ENCODE measurements at regions of chr3 and their contacts with region 1.

Region 1: GRCh38 chr3:44712455-44713075 is at the start of gene ZNF502:
- DNase-seq: peak; percentile 85
- H3K4me3 ChIP-seq: peak within 1 kb of the TSS; percentile 76 to 98 (median 86)
- H3K27ac ChIP-seq: peak within 1 kb of the TSS; percentile 58
- H3K4me1 ChIP-seq: no peaks in the 10 kb centered on the region
- H3K27me3 ChIP-seq: no peaks in the 10 kb centered on the region
- CTCF ChIP-seq: peak; percentile 35 to 43
- POLR2A ChIP-seq: no peak
- total RNA-seq, gene ZNF502: 4.1 and 4.2 TPM in 2 replicates

Region 2: DNA sequence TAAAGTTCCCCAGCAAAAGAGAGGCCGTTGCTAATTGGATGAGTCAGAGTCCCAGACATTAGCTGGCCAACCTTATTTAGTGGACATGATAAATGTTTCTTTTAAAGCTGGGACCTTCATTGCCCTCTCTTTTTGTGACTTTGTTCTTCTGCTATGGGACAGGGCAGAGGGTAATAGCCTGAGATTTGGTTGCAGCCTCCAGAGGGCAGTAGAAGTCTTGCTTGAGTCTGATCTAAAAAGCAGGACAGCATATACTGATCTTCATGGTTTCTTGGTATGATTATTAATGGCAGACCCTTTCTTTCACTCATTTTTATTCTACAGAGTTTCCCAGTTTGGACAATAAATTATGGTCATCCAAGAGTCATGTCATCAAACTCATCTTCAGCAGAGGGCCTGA is 182.6 kb before region 1 on chr3:
- CTCF ChIA-PET with region 1: interaction called, 5 read pairs
- POLR2A ChIA-PET with region 1: no interaction called
- dilution Hi-C with region 1: no loop called
- intact Hi-C with region 1: loop called (anchors 1 kb)
- DNase-seq: peak; percentile 8
- H3K4me3 ChIP-seq: no peak overlapping the region
- H3K27ac ChIP-seq: no peak overlapping the region
- H3K4me1 ChIP-seq: no peaks in the 10 kb centered on the region
- H3K27me3 ChIP-seq: no peaks in the 10 kb centered on the region
- CTCF ChIP-seq: peak; percentile 21 to 23
- POLR2A ChIP-seq: no peak

Region 3: GRCh38 chr3:44584646-44585501 is 127.7 kb before region 1 on chr3 and contains the start of gene ZNF660:
- CTCF ChIA-PET with region 1: no interaction called
- POLR2A ChIA-PET with region 1: no interaction called
- dilution Hi-C with region 1: no loop called
- intact Hi-C with region 1: no loop called
- DNase-seq: peak; percentile 55
- H3K4me3 ChIP-seq: peak within 1 kb of the TSS; percentile 50 to 61 (median 51)
- H3K27ac ChIP-seq: no peak within 1 kb of the TSS
- H3K4me1 ChIP-seq: peaks cover 2% of the 10 kb centered on the region
- H3K27me3 ChIP-seq: peaks cover 15 to 16% of the 10 kb centered on the region in 2 experiments
- CTCF ChIP-seq: no peak
- POLR2A ChIP-seq: no peak
- total RNA-seq, gene ZNF660: 1.0 and 1.5 TPM in 2 replicates

Region 4: DNA sequence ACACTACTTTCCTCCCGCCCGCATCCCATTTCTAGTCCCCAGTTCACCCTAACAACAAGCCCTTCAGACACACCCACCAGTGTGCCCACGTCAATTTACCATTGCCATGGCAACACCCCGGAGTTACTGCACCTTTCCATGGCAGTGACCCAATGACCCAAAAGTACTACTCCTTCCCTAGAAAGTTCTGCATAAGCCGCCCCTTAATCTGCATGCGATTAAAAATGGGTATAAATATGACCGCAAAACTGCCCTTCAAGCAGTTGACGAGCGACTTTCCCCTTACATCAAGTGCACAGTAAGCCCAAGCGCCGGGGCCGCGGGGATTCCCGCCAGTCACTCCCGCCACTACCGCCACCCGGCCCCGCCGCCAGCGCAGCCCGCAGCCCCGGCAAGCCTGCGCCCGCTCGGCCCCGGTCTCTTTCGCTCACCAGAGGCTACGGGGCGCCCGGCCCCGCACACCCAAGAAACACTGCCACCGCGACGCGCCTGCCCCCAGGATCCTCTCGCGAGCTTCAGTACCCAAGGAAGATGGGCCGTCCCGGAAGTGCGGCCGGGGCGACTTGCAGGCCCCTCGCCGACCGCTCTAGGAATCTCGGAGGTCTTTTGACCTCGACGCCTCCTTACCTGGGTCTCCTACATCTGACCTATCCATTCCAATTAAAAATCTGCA is 27.3 kb before region 1 on chr3:
- CTCF ChIA-PET with region 1: no interaction called
- POLR2A ChIA-PET with region 1: no interaction called
- dilution Hi-C with region 1: no loop called
- intact Hi-C with region 1: no loop called
- DNase-seq: peak; percentile 52
- H3K4me3 ChIP-seq: peak overlapping the region; percentile 7 to 44 (median 35)
- H3K27ac ChIP-seq: no peak overlapping the region
- H3K4me1 ChIP-seq: no peaks in the 10 kb centered on the region
- H3K27me3 ChIP-seq: no peaks in the 10 kb centered on the region
- CTCF ChIP-seq: no peak
- POLR2A ChIP-seq: no peak

Region 5: DNA sequence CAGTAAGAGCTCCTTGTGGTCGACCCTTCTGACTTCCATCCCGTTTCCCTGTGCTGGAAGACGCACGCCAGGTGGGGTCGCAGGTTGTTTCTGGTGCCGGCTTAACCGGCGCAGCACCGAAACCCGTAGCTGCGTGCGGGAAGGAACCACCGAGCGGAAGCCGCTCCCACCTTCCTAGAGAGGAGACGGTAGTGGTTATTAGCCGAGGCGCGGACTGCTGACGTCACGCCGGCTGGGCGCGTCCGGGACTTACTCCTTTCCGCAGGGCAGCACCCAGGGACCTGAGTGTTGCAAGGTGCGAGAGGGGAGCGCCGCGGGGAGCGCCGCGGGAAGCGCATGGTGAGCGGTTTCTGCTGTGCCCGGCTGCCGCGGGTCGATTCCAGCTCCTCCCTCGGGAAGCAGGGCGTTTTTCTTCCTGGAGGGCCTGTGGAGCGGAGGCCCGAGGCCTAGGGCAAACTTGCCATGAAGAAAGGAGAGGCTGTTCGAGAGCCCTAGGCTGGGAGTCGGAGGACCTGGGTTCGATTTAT is 16.9 kb after region 1 on chr3 and contains the start of gene ZNF501:
- CTCF ChIA-PET with region 1: interaction called, 29 read pairs
- POLR2A ChIA-PET with region 1: interaction called, 11 read pairs
- dilution Hi-C with region 1: no loop called
- intact Hi-C with region 1: loop called (anchors 1 kb)
- DNase-seq: peak; percentile 83
- H3K4me3 ChIP-seq: peak within 1 kb of the TSS; percentile 67 to 82 (median 72)
- H3K27ac ChIP-seq: peak within 1 kb of the TSS; percentile 27
- H3K4me1 ChIP-seq: no peaks in the 10 kb centered on the region
- H3K27me3 ChIP-seq: no peaks in the 10 kb centered on the region
- CTCF ChIP-seq: no peak
- POLR2A ChIP-seq: peak; percentile 36
- total RNA-seq, gene ZNF501: 2.9 and 3.9 TPM in 2 replicates

Measured in endothelial cell of umbilical vein (primary cell).